ENCODE measurements at regions of chr2 and their contacts with region 1.

Region 1: DNA sequence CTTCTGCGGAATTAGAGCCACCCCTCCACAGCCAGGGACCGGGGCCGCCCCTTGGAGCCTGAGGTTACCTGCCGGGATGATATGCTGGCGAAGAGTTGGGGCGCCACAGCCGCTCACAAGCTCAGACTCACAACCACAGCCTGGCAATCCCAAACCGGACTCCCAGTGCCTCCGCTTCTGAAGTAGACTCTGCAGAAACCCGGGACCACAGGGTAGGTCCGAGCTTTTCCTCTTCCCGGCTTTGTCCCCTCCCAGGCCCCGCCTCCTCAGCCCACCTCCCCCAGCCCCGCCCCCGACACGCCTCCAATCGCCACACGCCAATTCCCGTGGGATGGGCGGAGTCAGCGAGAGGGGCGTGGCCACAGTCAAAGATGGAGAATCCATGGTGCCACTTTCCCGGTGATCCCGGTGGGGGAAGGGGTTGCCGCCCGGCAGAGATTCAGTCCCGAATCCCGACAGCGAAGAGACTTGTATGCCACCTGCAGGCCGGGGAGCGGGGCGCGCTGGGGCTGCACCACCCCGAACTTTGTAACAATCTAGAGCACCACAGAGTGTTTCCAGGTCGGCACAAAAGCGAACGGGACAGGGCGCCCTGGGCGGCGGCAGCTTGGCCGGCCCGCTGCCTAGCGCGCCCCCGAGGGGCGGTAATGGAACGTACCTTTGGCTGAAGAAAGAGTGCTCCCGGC is at the start of gene IDH1:
- DNase-seq: peak; percentile 82
- H3K4me3 ChIP-seq: peak within 1 kb of the TSS; percentile 85
- H3K27ac ChIP-seq: peak within 1 kb of the TSS; percentile 42
- H3K27me3 ChIP-seq: no peaks in the 10 kb centered on the region
- CTCF ChIP-seq: peak; percentile 62
- polyA plus RNA-seq, gene IDH1: 111 and 148 TPM in 2 replicates

Region 2: DNA sequence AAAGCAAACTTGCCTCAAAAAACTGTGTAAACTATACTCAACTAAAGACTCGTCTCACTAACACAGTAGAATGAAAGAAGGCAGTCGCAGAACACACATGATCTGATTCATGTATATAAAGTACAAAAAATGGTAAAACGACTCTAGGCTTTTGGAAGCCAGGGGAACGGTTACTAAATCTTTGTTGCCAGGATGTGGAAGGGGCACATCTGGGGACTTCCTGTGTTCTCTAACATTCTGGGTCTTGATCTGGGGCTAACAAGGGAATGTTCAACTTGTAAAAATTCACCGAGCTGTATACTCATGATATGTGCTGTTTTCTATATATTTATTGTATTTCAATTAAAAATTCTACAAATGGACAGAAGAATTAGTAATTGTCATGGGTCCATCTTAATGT is 50.8 kb before region 1 on chr2:
- CTCF ChIA-PET with region 1: no interaction called
- POLR2A ChIA-PET with region 1: no interaction called
- DNase-seq: no peak
- H3K4me3 ChIP-seq: no peak overlapping the region
- H3K27ac ChIP-seq: no peak overlapping the region
- H3K27me3 ChIP-seq: no peaks in the 10 kb centered on the region
- CTCF ChIP-seq: no peak

Region 3: DNA sequence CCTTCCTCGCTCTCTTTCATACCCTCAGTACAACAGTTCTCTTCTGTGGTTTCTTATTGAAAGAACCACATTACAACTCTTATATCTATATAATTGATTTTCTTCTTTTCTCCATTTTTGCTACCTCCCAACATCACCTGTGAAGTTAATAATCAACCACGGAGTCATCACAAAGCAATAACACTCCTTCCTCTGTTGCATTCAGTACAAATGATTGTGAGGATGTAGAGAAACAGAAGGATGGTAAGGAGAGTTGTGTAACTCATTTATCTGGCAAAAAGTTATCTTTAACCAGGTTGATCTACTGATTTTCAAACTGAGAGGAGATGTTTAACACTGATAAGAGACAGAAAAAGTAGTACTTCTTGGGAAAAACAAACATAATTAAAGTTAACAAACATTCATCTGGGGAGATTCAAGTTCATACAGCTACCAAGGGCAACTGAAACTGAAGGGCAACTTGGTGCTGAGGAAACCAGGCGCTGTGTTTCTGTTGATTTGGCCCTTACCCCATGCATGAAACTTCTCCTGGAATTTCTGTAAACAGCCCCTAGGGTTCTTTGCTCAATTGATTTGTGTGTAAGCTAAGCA is 14.3 kb before region 1 on chr2:
- CTCF ChIA-PET with region 1: interaction called, 19 read pairs
- POLR2A ChIA-PET with region 1: no interaction called
- DNase-seq: no peak
- H3K4me3 ChIP-seq: no peak overlapping the region
- H3K27ac ChIP-seq: no peak overlapping the region
- H3K27me3 ChIP-seq: no peaks in the 10 kb centered on the region
- CTCF ChIP-seq: no peak

Region 4: GRCh38 chr2:208265801-208266552 is 11.0 kb after region 1 on chr2 and contains the start of gene PIKFYVE:
- CTCF ChIA-PET with region 1: interaction called, 57 read pairs
- POLR2A ChIA-PET with region 1: interaction called, 25 read pairs
- DNase-seq: peak; percentile 91
- H3K4me3 ChIP-seq: peak within 1 kb of the TSS; percentile 91
- H3K27ac ChIP-seq: peak within 1 kb of the TSS; percentile 92
- H3K27me3 ChIP-seq: no peaks in the 10 kb centered on the region
- CTCF ChIP-seq: no peak
- polyA plus RNA-seq, gene PIKFYVE: 19.6 and 23.8 TPM in 2 replicates